ENCODE measurements at regions of chr2 and their contacts with region 1.

Region 1: GRCh38 chr2:134118279-134119116 is 135.4 kb upstream of the MGAT5 start:
- DNase-seq: peak; percentile 50
- ATAC-seq: peak; percentile 49
- H3K4me3 Mint-ChIP-seq: peak overlapping the region; percentile 99
- H3K27ac Mint-ChIP-seq: peak overlapping the region; percentile 46
- H3K4me1 Mint-ChIP-seq: peaks cover 38% of the 10 kb centered on the region
- H3K27me3 Mint-ChIP-seq: no peaks in the 10 kb centered on the region
- CTCF ChIP-seq: no peak

Region 2: DNA sequence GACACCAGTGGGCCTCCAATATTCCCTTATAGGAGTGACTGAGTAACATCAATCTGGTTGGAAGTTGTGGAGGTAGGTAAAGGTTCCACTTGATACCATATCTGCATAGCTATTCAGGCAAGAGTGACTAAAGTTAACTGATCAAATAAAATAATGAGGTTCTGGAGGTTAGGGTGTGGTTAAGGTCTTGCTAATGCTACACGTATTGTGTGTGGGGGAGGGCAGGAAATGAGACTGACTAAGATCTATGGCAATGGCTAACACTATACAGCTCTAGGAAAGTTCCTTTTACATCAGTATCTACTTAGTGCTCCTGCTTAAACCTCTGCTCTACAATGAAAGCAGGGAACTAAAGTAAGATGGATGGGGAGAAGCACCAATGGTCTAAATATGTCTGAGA is 13.7 kb before region 1 on chr2:
- CTCF ChIA-PET with region 1: no interaction called
- POLR2A ChIA-PET with region 1: no interaction called
- intact Hi-C with region 1: no loop called
- DNase-seq: no peak
- ATAC-seq: no peak
- H3K4me3 Mint-ChIP-seq: no peak overlapping the region
- H3K27ac Mint-ChIP-seq: no peak overlapping the region
- H3K4me1 Mint-ChIP-seq: peaks cover 5% of the 10 kb centered on the region
- H3K27me3 Mint-ChIP-seq: no peaks in the 10 kb centered on the region
- CTCF ChIP-seq: no peak

Region 3: DNA sequence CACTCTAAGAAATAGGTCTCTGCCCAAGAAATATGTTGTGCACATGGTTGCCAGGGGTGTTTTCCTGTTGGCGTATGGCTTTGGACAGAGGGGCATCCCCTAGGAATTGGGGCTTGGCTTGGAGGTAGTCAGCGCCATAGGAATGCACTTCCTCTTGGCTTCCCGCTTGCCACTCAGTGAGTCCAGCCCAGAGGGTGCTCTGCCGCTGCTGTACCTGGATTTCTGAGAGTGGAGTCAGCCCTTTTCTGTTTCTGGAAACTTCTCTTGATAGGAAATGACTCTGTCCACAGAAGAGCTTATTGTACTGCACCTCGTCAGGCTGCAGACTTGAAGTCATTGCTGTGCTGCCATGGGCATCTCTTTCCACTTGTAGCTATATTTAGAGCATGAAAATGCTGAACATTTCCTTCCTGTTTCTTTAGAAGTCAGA is 18.7 kb after region 1 on chr2:
- CTCF ChIA-PET with region 1: no interaction called
- POLR2A ChIA-PET with region 1: interaction called, 4 read pairs
- intact Hi-C with region 1: loop called (anchors 1 kb)
- DNase-seq: no peak
- ATAC-seq: peak; percentile 52
- H3K4me3 Mint-ChIP-seq: peak overlapping the region; percentile 55
- H3K27ac Mint-ChIP-seq: peak overlapping the region; percentile 81
- H3K4me1 Mint-ChIP-seq: peaks cover 91% of the 10 kb centered on the region
- H3K27me3 Mint-ChIP-seq: no peaks in the 10 kb centered on the region
- CTCF ChIP-seq: no peak

Region 4: GRCh38 chr2:134207564-134208209 is 89.2 kb after region 1 on chr2:
- CTCF ChIA-PET with region 1: interaction called, 98 read pairs
- POLR2A ChIA-PET with region 1: interaction called, 46 read pairs
- intact Hi-C with region 1: loop called (anchors 5 kb)
- DNase-seq: peak; percentile 42
- ATAC-seq: peak; percentile 84
- H3K4me3 Mint-ChIP-seq: no peak overlapping the region
- H3K27ac Mint-ChIP-seq: peak overlapping the region; percentile 46
- H3K4me1 Mint-ChIP-seq: peaks cover 9% of the 10 kb centered on the region
- H3K27me3 Mint-ChIP-seq: no peaks in the 10 kb centered on the region
- CTCF ChIP-seq: no peak

Region 5: DNA sequence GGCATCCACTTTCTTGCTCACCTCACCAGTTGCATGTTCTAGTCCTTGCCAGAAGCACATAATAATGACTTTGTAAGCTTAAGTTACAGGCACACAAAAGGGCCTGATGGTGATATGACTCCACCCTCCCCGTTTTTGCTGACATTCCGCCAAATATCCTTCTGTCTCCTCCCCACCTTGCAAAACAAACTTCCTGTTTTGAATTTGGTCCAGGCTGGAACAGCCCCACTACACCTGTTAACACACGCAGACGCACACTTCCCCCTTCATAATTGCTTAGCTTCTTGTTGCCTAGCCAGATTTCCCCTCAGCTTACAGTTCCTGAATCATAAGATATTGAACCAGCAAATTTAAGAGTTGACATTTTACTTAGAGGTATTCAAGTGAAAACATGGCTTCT is 135.3 kb after region 1 on chr2 and contains the start of gene MGAT5:
- CTCF ChIA-PET with region 1: interaction called, 12 read pairs
- POLR2A ChIA-PET with region 1: interaction called, 22 read pairs
- intact Hi-C with region 1: no loop called
- DNase-seq: no peak
- ATAC-seq: peak; percentile 43
- H3K4me3 Mint-ChIP-seq: peak within 1 kb of the TSS; percentile 74
- H3K27ac Mint-ChIP-seq: peak within 1 kb of the TSS; percentile 95
- H3K4me1 Mint-ChIP-seq: peaks cover 95% of the 10 kb centered on the region
- H3K27me3 Mint-ChIP-seq: no peaks in the 10 kb centered on the region
- CTCF ChIP-seq: no peak
- total RNA-seq, gene MGAT5: 66.7 and 69.0 TPM in 2 replicates

Region 6: DNA sequence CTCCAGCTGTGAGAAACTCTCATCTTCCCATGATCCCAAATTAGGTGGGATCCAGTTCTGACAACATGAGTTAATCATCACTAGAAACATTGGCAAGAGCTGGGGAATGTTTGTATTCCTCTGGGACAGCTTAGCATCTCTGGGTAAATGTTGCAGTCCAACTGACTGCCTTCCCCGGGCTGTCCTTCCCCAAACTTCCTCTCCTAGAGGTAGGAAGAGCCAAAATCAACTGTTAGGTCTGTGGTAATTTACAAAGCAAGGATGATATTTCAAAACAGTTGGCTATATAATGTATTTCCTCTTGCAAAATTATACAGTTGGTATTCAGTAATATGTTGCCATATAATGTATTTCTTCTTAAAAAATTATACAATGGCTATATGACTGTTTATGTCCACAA is 283.9 kb after region 1 on chr2:
- CTCF ChIA-PET with region 1: interaction called, 10 read pairs
- POLR2A ChIA-PET with region 1: no interaction called
- intact Hi-C with region 1: no loop called
- DNase-seq: no peak
- ATAC-seq: no peak
- H3K4me3 Mint-ChIP-seq: no peak overlapping the region
- H3K27ac Mint-ChIP-seq: peak overlapping the region; percentile 33
- H3K4me1 Mint-ChIP-seq: peaks cover 16% of the 10 kb centered on the region
- H3K27me3 Mint-ChIP-seq: no peaks in the 10 kb centered on the region
- CTCF ChIP-seq: no peak

Region 7: GRCh38 chr2:134897932-134898331 is 779.4 kb after region 1 on chr2:
- CTCF ChIA-PET with region 1: no interaction called
- POLR2A ChIA-PET with region 1: no interaction called
- intact Hi-C with region 1: loop called (anchors 1 kb)
- DNase-seq: no peak
- ATAC-seq: no peak
- H3K4me3 Mint-ChIP-seq: no peak overlapping the region
- H3K27ac Mint-ChIP-seq: no peak overlapping the region
- H3K4me1 Mint-ChIP-seq: no peaks in the 10 kb centered on the region
- H3K27me3 Mint-ChIP-seq: no peaks in the 10 kb centered on the region
- CTCF ChIP-seq: no peak

Measured in activated B cell treated with CpG ODN at 0.5 μM for 24 hours (primary cell).